Activated CD4-positive, alpha-beta T cell treated with anti-CD3 and anti-CD28 coated beads, Interleukin-2, amount 10 ng/mL, durations not matched to agents 7 days and 5 days (primary cell): ENCODE measurements at regions of chr14 and their contacts with region 1.

Region 1: DNA sequence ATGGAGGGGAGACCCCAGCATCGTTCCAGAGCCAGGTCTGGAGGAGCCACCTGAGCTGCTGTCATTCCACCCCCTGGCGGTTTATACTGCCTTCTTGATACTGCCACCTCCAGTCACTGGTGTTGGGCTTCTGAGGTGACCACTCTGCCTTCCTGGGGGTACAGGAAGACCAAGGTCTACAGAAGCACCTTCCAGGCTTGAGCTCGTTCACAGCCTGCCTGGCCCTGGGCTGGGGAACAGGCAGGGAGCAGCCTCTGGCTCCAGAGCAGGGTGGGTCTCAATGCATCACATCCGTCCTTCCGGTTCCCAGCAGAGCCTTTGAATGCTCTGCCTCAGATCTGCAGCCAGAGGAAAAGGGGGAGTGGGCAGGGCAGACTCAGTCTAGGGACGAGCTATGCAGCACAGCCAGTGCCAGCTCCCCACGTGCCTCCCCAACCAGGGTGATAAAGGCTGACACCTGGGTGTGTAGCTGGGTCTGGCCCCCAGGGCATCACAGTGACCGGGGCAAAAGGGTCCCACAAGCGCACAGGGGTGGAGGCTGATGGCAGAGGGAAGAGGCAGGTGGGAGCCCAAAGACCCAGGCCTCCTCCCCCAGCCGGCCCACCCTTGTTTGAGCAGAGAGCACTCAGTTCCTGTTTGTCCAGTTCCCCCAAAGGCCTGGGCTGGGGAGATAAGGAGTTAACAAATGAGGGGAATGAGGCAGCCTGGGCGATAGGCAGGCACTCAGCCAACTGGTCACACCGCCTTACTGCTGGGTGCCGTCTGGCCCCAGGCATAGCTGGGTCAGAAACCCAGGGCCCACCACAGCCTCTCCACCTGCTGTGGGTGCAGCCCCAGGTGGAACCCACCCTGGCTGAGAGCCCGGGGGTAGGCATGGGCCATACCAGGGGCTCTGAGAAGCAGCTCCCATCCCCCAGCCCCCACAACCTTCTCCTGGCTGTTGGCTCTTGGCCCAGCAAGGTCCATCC is 17.1 kb downstream of the DEGS2 start:
- DNase-seq: no peak
- H3K4me3 Mint-ChIP-seq: no peak overlapping the region
- H3K27ac Mint-ChIP-seq: no peak overlapping the region
- H3K4me1 Mint-ChIP-seq: peaks cover 19% of the 10 kb centered on the region
- H3K27me3 Mint-ChIP-seq: no peaks in the 10 kb centered on the region

Region 2: GRCh38 chr14:100155042-100155846 is 12.9 kb after region 1 on chr14:
- CTCF ChIA-PET with region 1: interaction called, 13 read pairs
- POLR2A ChIA-PET with region 1: no interaction called
- DNase-seq: no peak
- H3K4me3 Mint-ChIP-seq: no peak overlapping the region
- H3K27ac Mint-ChIP-seq: peak overlapping the region; percentile 46
- H3K4me1 Mint-ChIP-seq: peaks cover 4% of the 10 kb centered on the region
- H3K27me3 Mint-ChIP-seq: peaks cover 31% of the 10 kb centered on the region